Activated CD4-positive, alpha-beta memory T cell treated with anti-CD3 and anti-CD28 coated beads, Interleukin-2, amount 10 ng/mL, durations not matched to agents 7 days and 5 days (primary cell): ENCODE measurements at regions of chr17 and their contacts with region 1.

Region 1: DNA sequence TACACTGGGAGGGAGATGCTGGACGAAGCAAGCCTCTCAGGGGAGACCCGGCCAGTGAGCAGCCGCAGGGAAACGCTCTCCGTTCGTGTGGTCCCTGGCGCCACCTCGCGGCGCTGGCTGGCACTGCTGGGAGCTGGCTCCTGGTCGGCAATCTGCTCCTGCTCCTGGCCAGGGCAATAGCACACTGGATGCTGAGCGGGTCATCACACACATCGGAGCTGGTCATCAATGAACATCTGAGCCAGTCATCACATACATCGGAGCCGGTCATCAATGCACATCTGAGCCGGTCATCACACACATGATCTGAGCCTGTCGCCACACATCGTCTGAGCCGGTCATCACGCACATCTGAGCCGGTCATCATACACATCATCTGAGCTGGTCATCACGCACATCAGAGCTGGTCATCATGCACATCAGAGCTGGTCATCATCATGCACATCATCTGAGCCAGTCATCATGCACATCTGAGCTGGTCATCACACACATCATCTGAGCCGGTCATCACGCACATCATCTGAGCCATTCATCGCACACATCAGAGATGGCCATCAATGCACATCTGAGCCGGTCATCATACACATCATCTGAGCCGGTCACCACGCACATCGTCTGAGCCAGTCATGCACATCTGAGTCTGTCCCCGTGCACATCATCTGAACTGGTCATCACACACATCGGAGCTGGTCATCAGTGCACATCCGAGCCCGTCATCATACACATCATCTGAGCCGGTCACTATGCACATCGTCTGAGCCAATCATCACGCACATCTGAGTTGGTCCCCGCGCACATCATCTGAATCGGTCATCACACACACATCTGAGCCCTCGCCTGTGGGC is 217.3 kb downstream of the RBFOX3 start:
- DNase-seq: peak; percentile 62
- H3K4me3 Mint-ChIP-seq: no peak overlapping the region
- H3K27ac Mint-ChIP-seq: no peak overlapping the region
- H3K4me1 Mint-ChIP-seq: no peaks in the 10 kb centered on the region
- H3K27me3 Mint-ChIP-seq: peaks cover 29% of the 10 kb centered on the region

Region 2: DNA sequence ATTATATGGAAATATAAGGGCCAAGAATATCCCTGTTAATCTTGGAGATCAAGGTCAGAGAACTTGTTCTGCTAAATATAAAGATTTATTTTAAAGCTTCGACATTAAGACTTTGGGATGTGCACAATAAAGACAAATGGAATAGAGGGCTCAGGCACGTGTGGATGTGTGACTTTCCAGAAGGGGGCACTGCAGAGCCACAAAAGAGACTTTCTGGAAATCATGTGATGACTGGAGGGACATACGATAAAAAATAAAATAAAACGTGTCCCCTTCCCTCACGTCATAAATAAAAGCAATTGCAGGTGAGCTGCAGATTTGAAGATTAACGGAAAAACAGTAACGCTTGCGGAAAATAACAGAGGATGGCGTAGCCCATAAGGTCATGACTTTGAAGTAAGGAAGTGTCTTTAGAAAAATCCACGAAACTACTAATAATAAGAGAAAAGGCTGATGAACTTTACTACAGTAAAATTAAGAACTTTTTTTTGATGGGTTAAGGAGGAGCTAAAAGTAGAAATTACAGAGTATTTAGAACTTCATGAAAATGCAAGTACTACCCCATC is 328.4 kb before region 1 on chr17:
- CTCF ChIA-PET with region 1: interaction called, 11 read pairs
- POLR2A ChIA-PET with region 1: no interaction called
- DNase-seq: peak; percentile 65
- H3K4me3 Mint-ChIP-seq: no peak overlapping the region
- H3K27ac Mint-ChIP-seq: no peak overlapping the region
- H3K4me1 Mint-ChIP-seq: peaks cover 3% of the 10 kb centered on the region
- H3K27me3 Mint-ChIP-seq: peaks cover 3% of the 10 kb centered on the region

Region 3: GRCh38 chr17:79087428-79088143 is 306.0 kb before region 1 on chr17:
- CTCF ChIA-PET with region 1: interaction called, 17 read pairs
- POLR2A ChIA-PET with region 1: interaction called, 4 read pairs
- DNase-seq: peak; percentile 74
- H3K4me3 Mint-ChIP-seq: no peak overlapping the region
- H3K27ac Mint-ChIP-seq: no peak overlapping the region
- H3K4me1 Mint-ChIP-seq: peaks cover 4% of the 10 kb centered on the region
- H3K27me3 Mint-ChIP-seq: no peaks in the 10 kb centered on the region

Region 4: GRCh38 chr17:79349506-79350400 is 43.8 kb before region 1 on chr17:
- CTCF ChIA-PET with region 1: no interaction called
- POLR2A ChIA-PET with region 1: no interaction called
- DNase-seq: no peak
- H3K4me3 Mint-ChIP-seq: no peak overlapping the region
- H3K27ac Mint-ChIP-seq: no peak overlapping the region
- H3K4me1 Mint-ChIP-seq: no peaks in the 10 kb centered on the region
- H3K27me3 Mint-ChIP-seq: peaks cover 34% of the 10 kb centered on the region

Region 5: DNA sequence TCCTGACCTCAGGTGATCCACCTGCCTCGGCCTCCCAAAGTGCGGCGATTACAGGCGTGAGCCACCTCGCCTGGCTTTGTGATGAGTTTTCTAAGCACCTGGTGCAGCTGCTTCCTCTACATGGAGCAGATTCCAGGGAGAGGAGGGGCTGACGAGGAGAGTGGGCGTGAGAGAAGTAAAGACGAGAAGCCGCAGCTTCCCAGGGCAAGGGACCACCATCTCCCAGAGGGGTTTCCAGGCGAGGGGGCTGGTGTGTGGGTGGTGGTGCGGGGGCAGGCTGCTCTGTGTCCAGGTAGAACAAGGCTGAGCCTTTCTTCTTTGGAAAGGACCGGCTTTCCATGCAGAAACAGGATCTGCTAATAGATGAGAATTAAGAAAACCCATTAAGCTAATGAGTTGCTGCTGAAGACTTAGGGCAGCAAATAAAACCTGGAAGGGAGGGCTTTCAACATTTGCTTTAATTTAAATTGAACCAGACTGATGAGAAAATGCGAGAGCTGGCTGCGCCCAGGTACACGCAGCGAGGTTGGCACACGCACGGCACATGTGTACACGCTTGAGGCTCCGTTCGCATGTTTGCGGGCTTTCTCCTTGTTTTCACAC is 19.4 kb before region 1 on chr17:
- CTCF ChIA-PET with region 1: no interaction called
- POLR2A ChIA-PET with region 1: no interaction called
- DNase-seq: no peak
- H3K4me3 Mint-ChIP-seq: no peak overlapping the region
- H3K27ac Mint-ChIP-seq: no peak overlapping the region
- H3K4me1 Mint-ChIP-seq: no peaks in the 10 kb centered on the region
- H3K27me3 Mint-ChIP-seq: no peaks in the 10 kb centered on the region